ENCODE measurements at regions of chr10 and their contacts with region 1.

Region 1: GRCh38 chr10:30986053-30986555 is 45.6 kb downstream of the ZNF438 start:
- DNase-seq: no peak
- H3K4me3 Mint-ChIP-seq: peak overlapping the region; percentile 31
- H3K27ac Mint-ChIP-seq: peak overlapping the region; percentile 91
- H3K4me1 Mint-ChIP-seq: peaks cover 30% of the 10 kb centered on the region
- H3K27me3 Mint-ChIP-seq: no peaks in the 10 kb centered on the region

Region 2: DNA sequence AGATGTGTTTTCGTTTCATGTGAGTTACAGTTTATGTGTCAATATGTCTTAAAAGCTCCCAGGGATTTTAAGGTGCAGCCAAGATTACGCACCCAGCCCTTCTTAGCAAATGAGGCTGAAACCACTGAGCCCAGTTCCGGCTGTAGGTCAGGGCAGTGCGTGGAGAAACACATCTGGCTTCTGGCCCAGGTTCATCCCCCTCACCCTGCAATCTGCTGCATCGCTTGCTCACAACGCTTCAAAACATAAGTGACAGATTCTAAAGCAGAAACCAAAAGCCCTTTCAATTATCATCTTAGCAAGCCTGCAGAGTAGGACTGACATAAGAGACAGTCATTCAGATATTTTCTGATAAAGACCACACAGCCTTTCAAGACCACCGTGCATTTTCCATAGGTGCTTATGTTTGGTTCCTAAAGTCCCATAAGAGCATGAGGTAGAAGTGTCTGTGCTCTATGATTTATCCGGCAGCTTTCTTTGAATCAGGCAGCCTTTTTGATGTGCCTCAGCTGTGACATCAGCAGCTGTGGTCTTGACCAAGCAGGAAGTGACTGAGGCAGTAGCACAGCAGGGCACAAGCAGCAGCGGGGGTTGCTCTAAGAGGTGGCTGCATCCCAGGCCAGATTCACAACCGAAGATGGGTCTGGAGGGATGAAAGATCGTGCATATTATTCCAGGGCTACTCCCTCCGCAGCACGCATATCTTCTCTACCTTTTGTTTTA is 284.5 kb before region 1 on chr10:
- intact Hi-C with region 1: loop called (anchors 5 kb)
- DNase-seq: peak; percentile 77
- H3K4me3 Mint-ChIP-seq: peak overlapping the region; percentile 72
- H3K27ac Mint-ChIP-seq: peak overlapping the region; percentile 95
- H3K4me1 Mint-ChIP-seq: peaks cover 77% of the 10 kb centered on the region
- H3K27me3 Mint-ChIP-seq: no peaks in the 10 kb centered on the region

Region 3: DNA sequence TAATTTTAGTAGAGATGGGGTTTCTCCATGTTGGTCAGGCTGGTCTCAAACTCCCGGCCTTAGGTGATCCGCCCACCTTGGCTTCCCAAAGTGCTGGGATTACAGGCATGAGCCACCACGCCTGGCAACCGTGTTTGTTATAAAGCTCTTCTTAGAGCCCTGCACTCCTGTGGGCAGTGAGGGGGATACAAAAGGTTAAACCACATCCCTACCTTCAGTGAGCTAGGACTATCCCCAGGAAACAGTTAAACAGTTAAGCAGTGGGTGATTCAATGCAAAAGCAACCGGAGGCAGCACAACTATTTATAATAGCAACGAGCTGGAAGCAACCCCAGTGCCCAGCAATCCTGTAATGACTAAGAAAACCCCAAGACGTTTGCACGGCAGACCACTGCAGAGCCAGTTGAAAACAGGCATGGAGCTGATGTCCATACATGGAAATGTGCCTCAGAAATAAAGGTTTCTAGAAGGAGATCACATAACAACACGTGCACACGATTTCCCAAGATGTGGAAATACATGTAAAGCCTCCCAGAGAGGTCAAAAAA is 249.3 kb before region 1 on chr10:
- intact Hi-C with region 1: loop called (anchors 5 kb)
- DNase-seq: peak; percentile 32
- H3K4me3 Mint-ChIP-seq: no peak overlapping the region
- H3K27ac Mint-ChIP-seq: peak overlapping the region; percentile 87
- H3K4me1 Mint-ChIP-seq: peaks cover 31% of the 10 kb centered on the region
- H3K27me3 Mint-ChIP-seq: no peaks in the 10 kb centered on the region

Region 4: GRCh38 chr10:30893208-30893607 is 92.9 kb before region 1 on chr10:
- intact Hi-C with region 1: no loop called
- DNase-seq: no peak
- H3K4me3 Mint-ChIP-seq: no peak overlapping the region
- H3K27ac Mint-ChIP-seq: no peak overlapping the region
- H3K4me1 Mint-ChIP-seq: peaks cover 12% of the 10 kb centered on the region
- H3K27me3 Mint-ChIP-seq: no peaks in the 10 kb centered on the region

Region 5: GRCh38 chr10:30967650-30968410 is 18.3 kb before region 1 on chr10:
- intact Hi-C with region 1: loop called (anchors 1 kb)
- DNase-seq: no peak
- H3K4me3 Mint-ChIP-seq: no peak overlapping the region
- H3K27ac Mint-ChIP-seq: peak overlapping the region; percentile 60
- H3K4me1 Mint-ChIP-seq: peaks cover 35% of the 10 kb centered on the region
- H3K27me3 Mint-ChIP-seq: no peaks in the 10 kb centered on the region

Region 6: GRCh38 chr10:30999070-30999712 is 13.1 kb after region 1 on chr10:
- intact Hi-C with region 1: loop called (anchors 1 kb)
- DNase-seq: no peak
- H3K4me3 Mint-ChIP-seq: peak overlapping the region; percentile 73
- H3K27ac Mint-ChIP-seq: peak overlapping the region; percentile 93
- H3K4me1 Mint-ChIP-seq: peaks cover 48% of the 10 kb centered on the region
- H3K27me3 Mint-ChIP-seq: no peaks in the 10 kb centered on the region

Region 7: DNA sequence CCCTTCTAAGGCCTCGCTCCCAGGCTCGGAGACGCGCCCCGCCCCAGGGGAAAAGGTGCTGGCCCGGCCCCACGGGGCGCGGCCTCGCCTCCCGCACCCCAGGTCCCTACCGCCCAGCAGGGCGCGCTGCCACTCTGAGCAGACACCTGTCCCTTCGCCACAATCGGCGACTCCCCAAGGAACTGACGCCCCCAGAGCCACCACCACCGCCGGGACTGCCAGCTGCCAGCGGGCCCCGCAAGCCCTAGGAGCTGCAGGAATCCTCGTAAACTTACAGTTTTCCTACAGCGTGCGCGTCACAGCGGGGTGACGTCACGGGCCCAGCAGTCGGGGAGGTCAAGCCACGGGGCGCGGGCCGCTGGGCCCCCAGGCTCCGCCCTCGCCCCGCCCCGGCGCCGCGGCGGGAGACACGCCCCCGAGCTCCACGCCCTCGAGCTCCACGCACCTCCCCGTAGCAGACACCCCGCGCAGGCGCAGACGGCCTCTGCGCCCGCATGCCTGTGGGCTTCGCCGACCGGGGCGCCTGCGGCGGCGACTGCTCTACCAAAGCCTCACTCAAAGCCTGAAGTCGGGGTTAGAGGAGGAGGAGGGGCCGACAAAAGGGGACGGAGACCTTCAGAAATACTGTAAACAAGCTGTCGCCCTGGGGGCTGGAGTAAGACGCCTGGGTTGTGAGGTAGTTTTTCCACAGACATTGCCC is 45.6 kb after region 1 on chr10 and contains the start of gene ZNF438:
- intact Hi-C with region 1: loop called (anchors 1 kb)
- DNase-seq: peak; percentile 94
- H3K4me3 Mint-ChIP-seq: peak within 1 kb of the TSS; percentile 86
- H3K27ac Mint-ChIP-seq: peak within 1 kb of the TSS; percentile 98
- H3K4me1 Mint-ChIP-seq: peaks cover 27% of the 10 kb centered on the region
- H3K27me3 Mint-ChIP-seq: no peaks in the 10 kb centered on the region
- total RNA-seq, gene ZNF438: 5.8 and 6.1 TPM in 2 replicates

Region 8: GRCh38 chr10:31304291-31304970 is 318.3 kb after region 1 on chr10:
- intact Hi-C with region 1: no loop called
- DNase-seq: no peak
- H3K4me3 Mint-ChIP-seq: no peak overlapping the region
- H3K27ac Mint-ChIP-seq: no peak overlapping the region
- H3K4me1 Mint-ChIP-seq: no peaks in the 10 kb centered on the region
- H3K27me3 Mint-ChIP-seq: peaks cover 2% of the 10 kb centered on the region

Measured in activated T-helper 2 cell treated with anti-CD3 and anti-CD28 coated beads, Interferon-gamma antibody, Interleukin-2, Interleukin-4, amounts not matched to agents 10 μg/mL and 5 μg/mL and 100 μg/mL, durations not matched to agents 14 hours and 24 hours and 36 hours (primary cell).